ENCODE measurements at regions of chr14 and their contacts with region 1.

Region 1: GRCh38 chr14:79724934-79725717 is 486.2 kb downstream of the DIO2 start:
- DNase-seq: no peak

Region 2: GRCh38 chr14:78292003-78292402 is 1433.1 kb before region 1 on chr14:
- intact Hi-C with region 1: loop called in 1 of 2 experiments (anchors 10 kb)
- DNase-seq: no peak

Region 3: GRCh38 chr14:79453276-79453675 is 271.9 kb before region 1 on chr14:
- intact Hi-C with region 1: no loop called
- DNase-seq: no peak

Measured in posterior vena cava (tissue), 2 donors.